Tibial artery (tissue), 4 donors: ENCODE measurements at regions of chr3 and their contacts with region 1.

Region 1: GRCh38 chr3:157618075-157618760 is 115.0 kb upstream of the VEPH1 start:
- DNase-seq: no peak
- H3K4me3 ChIP-seq: no peak overlapping the region
- H3K27ac ChIP-seq: no peak overlapping the region
- H3K4me1 ChIP-seq: peaks cover 0 to 4% (median 1%) of the 10 kb centered on the region in 4 donors
- H3K27me3 ChIP-seq: no peaks in the 10 kb centered on the region
- CTCF ChIP-seq: peak; percentile 66 to 80

Region 2: DNA sequence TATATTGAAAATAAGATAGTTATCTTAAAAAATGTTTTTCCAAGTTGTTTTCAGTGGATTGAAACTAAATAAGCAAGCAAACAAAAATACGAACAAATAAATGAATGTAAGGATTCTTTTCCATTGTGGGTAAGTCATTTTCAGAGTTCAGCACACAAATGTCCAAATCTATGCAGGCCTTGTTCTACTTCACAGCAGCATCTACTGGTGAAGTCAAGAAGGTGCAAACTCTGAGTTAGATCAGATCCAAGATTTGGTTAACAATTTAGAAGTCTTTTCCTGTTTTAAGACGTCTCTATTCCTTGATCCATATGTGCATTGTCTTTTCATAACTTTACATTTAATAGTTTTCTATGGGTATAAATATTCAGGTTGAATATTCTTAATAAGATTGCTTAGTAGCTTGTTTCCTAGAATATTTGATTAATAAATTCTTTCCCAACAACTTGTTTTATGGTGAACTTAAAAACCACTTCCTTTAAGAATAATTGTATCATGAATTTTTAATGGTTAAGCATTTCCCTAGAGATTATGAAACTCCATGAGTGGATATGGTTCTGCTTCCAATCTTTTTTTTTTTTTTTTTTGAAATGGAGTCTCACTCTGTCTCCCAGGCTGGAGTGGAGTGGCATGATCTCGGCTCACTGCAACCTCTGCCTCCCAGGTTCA is 171.1 kb before region 1 on chr3:
- intact Hi-C with region 1: no loop called
- DNase-seq: no peak
- H3K4me3 ChIP-seq: no peak overlapping the region
- H3K27ac ChIP-seq: no peak overlapping the region
- H3K4me1 ChIP-seq: no peaks in the 10 kb centered on the region
- H3K27me3 ChIP-seq: no peaks in the 10 kb centered on the region
- CTCF ChIP-seq: peak; percentile 27 to 43

Region 3: DNA sequence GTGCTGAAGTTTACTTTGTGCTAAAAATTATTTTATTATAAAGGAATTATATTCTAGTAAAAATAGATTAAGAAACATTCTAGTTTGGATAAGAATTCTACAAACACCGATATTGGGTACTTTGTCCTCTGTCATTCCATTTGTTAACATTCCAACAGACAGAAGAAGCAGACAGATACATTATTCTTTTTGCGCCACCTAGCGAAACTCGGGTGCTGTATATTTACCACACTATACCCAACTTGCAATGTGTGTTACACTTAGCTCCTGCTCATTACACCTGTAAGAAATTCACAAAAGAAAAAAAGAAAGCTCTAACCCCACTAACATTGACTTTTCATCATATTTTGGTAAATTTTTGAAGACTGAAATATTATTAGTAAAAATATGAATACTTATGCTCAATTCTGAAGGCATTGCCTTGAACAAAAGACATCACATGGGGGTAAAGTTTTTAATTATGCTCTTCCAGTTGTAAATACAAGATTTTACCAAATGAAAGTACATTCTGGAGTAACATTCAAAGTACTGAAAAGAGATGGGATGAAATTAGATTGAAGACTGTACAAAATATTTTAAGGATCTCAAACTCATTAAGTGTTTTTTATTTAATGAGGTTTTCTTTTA is 816.3 kb after region 1 on chr3:
- intact Hi-C with region 1: loop called (anchors 5 kb)
- DNase-seq: peak; percentile 71
- H3K4me3 ChIP-seq: no peak overlapping the region
- H3K27ac ChIP-seq: no peak overlapping the region
- H3K4me1 ChIP-seq: no peaks in the 10 kb centered on the region
- H3K27me3 ChIP-seq: no peaks in the 10 kb centered on the region
- CTCF ChIP-seq: peak; percentile 66 to 78

Region 4: GRCh38 chr3:158539414-158540014 is 921.3 kb after region 1 on chr3:
- intact Hi-C with region 1: loop called (anchors 10 kb)
- DNase-seq: no peak
- H3K4me3 ChIP-seq: no peak overlapping the region
- H3K27ac ChIP-seq: no peak overlapping the region
- H3K4me1 ChIP-seq: no peaks in the 10 kb centered on the region
- H3K27me3 ChIP-seq: no peaks in the 10 kb centered on the region
- CTCF ChIP-seq: peak; percentile 27 to 32